CD8-positive, alpha-beta memory T cell (primary cell): ENCODE measurements at regions of chr11 and their contacts with region 1.

Region 1: DNA sequence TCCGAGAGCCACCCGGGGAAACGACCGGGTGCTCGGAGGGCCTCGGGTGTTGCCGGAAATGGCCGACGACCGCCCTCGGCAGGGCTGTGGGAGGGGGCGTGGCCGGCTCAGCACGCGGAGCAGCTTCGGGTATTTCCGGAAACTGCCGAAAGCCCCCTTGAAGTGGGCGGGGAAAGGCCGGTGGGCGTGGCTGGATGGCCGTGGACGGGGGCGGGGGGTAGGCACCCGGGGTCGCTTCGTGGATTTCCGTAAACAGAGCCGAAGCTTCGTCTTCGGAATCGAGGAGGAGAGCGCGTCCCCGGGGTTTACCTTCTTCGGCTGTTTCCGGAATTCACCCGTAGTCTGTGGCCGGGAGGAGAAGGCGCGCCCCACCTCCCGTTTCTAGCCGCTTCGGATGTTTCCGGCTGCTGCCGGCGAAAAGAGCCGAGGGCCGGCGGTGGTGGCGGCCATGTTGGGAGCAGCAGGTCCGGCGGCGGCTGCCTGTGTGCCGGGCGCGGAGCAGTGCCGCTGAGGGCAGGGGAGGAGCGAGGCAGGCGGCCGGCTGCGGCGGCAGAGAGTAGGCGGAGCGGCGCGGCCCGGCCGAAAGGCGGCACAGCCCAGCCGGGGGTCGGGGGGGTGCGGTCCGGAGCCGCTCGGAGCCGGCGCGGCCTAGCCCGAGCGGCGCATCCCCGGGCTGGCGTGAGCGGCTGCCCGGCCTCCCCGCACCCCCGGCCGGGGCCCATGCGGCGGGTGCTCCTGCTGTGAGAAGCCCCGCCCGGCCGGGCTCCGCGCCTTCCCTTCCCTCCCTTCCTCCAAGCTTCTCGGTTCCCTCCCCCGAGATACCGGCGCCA is at the start of gene MARK2:
- DNase-seq: peak; percentile 99 to 100 (median 100)
- H3K4me3 ChIP-seq: peak within 1 kb of the TSS; percentile 56
- H3K4me3 Mint-ChIP-seq: peak within 1 kb of the TSS; percentile 88 to 96 (median 92)
- H3K27ac ChIP-seq: peak within 1 kb of the TSS; percentile 80
- H3K27ac Mint-ChIP-seq: peak within 1 kb of the TSS; percentile 79 to 96 (median 92)
- H3K4me1 ChIP-seq: peaks cover 36% of the 10 kb centered on the region
- H3K4me1 Mint-ChIP-seq: peaks cover 54 to 61% (median 60%) of the 10 kb centered on the region in 3 donors
- H3K27me3 ChIP-seq: no peaks in the 10 kb centered on the region
- H3K27me3 Mint-ChIP-seq: peaks cover 0 to 4% of the 10 kb centered on the region in 2 donors
- total RNA-seq, gene MARK2: 34.5 to 38.0 TPM

Region 2: DNA sequence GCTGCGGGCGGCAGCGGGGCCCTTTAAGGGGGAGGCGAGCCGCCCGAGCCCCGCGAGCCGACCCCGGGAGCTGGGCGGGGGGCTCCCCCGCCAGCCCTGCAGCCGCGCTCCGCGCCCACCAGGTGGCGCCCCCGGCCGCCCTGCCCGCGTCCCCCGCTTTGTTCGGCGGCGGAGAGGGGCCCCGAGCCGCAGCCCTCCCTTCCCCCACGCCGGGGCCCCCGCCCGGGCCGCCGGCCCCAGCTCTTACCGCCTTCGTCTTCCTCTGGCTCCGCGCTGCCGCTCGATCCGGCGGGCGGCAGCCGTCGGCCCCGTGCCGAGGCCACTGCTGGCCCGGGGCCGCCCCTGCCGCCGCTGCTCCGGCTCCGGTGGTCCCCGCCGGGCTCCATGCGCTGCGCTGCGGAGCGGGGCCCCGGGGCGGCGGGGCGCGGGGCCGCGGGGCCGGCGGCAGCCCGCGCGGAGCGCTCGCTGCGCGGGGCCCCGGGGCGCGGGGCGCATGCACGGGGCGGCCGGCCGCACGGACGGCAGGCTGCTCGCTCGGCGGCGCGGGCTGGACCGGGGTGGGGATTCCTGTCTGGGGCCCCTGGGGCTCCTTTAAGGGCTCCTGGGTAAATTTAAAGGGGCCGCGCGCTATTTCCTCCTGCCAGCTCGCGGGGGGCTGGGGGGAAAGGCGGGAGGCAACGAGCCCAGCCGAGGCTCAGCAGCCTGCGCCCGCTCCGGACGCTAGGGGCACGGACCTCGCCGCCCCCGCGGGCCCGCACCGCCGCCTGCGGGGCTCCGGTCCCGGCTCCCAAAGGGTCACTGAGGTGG is 70.5 kb before region 1 on chr11 and contains the start of gene ZFTA:
- CTCF ChIA-PET with region 1: interaction called, 14 read pairs
- POLR2A ChIA-PET with region 1: interaction called, 3 read pairs
- DNase-seq: peak; percentile 50 to 76 (median 63)
- H3K4me3 ChIP-seq: peak within 1 kb of the TSS; percentile 76
- H3K4me3 Mint-ChIP-seq: peak within 1 kb of the TSS; percentile 87 to 99 (median 95)
- H3K27ac ChIP-seq: peak within 1 kb of the TSS; percentile 64
- H3K27ac Mint-ChIP-seq: peak within 1 kb of the TSS in 7 of 8 donors; percentile 23 to 91 (median 83)
- H3K4me1 ChIP-seq: peaks cover 8% of the 10 kb centered on the region
- H3K4me1 Mint-ChIP-seq: peaks cover 8 to 17% (median 9%) of the 10 kb centered on the region in 3 donors
- H3K27me3 ChIP-seq: no peaks in the 10 kb centered on the region
- H3K27me3 Mint-ChIP-seq: peaks cover 4 to 9% of the 10 kb centered on the region in 2 donors
- total RNA-seq, gene ZFTA: 7.0 to 7.6 TPM

Region 3: DNA sequence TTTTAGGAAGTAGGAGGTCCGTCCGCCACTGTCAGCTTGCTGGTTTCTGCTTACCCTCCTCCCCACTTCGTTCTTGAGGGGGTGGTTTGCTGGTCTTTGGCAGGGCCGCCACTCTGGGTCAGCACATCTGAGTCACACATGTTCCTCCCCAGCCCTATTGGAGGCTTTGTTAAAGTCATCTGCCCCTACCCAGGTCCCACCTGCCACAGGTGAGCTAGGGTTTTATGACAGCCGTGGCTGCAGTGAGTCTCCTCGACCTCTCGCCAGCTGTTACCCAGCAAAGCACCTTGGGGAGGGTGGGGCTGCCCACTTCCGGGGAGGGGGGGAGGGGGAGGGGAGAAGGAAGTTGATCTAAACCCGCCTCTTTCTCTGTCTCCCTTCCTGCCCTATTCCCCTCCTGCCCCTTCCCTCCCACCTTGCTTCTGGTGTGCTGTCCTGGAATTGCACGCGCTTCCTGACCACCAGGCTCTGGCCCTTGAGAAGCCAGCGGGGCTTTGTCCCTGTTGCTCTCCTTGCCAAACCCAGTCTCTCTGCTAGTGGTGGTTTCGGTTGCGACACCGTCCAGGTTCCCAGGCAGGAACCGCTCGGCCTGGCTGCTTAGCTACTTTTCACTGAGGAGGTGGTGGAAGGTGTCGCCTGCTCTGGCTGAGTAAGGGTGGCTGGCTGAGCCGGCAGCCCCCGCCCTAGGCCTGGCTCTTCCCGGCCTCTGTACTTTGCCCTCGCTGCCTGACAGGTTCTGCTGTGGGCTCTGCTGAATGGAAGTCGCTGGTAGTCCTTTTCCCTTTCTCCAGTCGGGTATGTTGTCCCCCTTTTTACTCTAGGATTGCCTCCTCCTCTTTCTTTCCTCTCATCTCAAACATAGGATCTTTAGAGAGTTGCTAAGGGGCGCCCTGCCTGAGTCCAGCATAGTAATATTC is 49.5 kb after region 1 on chr11:
- CTCF ChIA-PET with region 1: interaction called, 20 read pairs
- POLR2A ChIA-PET with region 1: interaction called, 8 read pairs
- DNase-seq: peak; percentile 59 to 81 (median 69)
- H3K4me3 ChIP-seq: peak overlapping the region; percentile 77
- H3K4me3 Mint-ChIP-seq: peak overlapping the region; percentile 90 to 98 (median 95)
- H3K27ac ChIP-seq: peak overlapping the region; percentile 85
- H3K27ac Mint-ChIP-seq: peak overlapping the region; percentile 80 to 99 (median 97)
- H3K4me1 ChIP-seq: peaks cover 73% of the 10 kb centered on the region
- H3K4me1 Mint-ChIP-seq: peaks cover 70 to 83% (median 82%) of the 10 kb centered on the region in 3 donors
- H3K27me3 ChIP-seq: no peaks in the 10 kb centered on the region
- H3K27me3 Mint-ChIP-seq: no peaks in the 10 kb centered on the region

Region 4: DNA sequence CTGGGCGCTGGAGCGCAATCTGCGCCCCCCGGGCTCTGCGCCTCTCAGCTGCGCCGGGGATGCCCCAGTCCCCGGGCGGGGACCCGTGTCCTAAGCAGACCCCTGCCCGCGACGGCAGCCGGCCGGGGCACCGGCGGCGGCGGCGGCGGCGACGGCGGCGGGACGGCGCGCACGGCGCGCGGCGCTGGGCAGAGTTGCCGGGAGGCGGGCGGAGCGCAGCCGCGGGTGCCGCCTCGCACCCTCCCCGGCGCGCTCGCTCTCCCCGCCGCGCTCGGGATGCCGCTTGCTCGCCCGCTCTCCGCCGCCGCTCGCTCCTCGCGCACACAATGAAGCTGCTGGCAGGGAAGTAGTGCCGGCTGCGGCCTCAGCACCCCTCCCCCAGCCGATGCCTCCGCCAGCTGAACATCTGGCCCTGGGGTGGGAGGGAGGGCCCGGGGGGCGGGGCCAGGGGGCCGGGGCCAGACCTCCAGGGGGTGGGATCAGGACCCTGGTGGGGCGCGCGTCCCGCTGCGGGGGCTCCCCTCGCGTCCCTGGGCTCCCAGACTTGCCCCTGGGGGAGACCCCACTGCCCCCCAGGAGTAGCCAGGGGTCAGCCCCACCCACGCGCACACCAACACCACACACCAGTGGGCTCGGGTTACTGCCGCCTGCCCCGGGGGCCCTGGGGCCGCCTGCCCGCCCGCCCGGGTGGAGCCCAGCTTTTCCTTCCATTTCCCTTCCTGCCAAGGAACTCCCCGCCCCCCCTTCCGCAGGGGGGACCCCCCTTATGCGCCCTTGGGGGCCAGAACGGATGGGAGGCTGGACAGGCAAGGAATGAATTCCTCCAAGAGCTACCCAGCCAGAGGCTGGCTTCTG is 78.2 kb after region 1 on chr11 and contains the start of gene RCOR2:
- CTCF ChIA-PET with region 1: interaction called, 16 read pairs
- POLR2A ChIA-PET with region 1: no interaction called
- DNase-seq: peak; percentile 28 to 69 (median 44)
- H3K4me3 ChIP-seq: peak within 1 kb of the TSS; percentile 69
- H3K4me3 Mint-ChIP-seq: peak within 1 kb of the TSS; percentile 78 to 89 (median 83)
- H3K27ac ChIP-seq: no peak within 1 kb of the TSS
- H3K27ac Mint-ChIP-seq: peak within 1 kb of the TSS in 3 of 8 donors; percentile 56 to 72 (median 60)
- H3K4me1 ChIP-seq: peaks cover 27% of the 10 kb centered on the region
- H3K4me1 Mint-ChIP-seq: peaks cover 8 to 26% (median 11%) of the 10 kb centered on the region in 3 donors
- H3K27me3 ChIP-seq: no peaks in the 10 kb centered on the region
- H3K27me3 Mint-ChIP-seq: peaks cover 0 to 1% of the 10 kb centered on the region in 2 donors
- total RNA-seq, gene RCOR2: 0.11 to 0.13 TPM

Region 5: GRCh38 chr11:63945477-63946163 is 106.7 kb after region 1 on chr11:
- CTCF ChIA-PET with region 1: interaction called, 225 read pairs
- POLR2A ChIA-PET with region 1: interaction called, 6 read pairs
- DNase-seq: peak; percentile 14 to 61 (median 45)
- H3K4me3 ChIP-seq: no peak overlapping the region
- H3K4me3 Mint-ChIP-seq: no peak overlapping the region
- H3K27ac ChIP-seq: no peak overlapping the region
- H3K27ac Mint-ChIP-seq: peak overlapping the region in 2 of 8 donors; percentile 8 to 32
- H3K4me1 ChIP-seq: no peaks in the 10 kb centered on the region
- H3K4me1 Mint-ChIP-seq: peaks cover 13 to 22% (median 22%) of the 10 kb centered on the region in 3 donors
- H3K27me3 ChIP-seq: no peaks in the 10 kb centered on the region
- H3K27me3 Mint-ChIP-seq: no peaks in the 10 kb centered on the region

Region 6: GRCh38 chr11:64152841-64153691 is 314.2 kb after region 1 on chr11:
- CTCF ChIA-PET with region 1: interaction called, 63 read pairs
- POLR2A ChIA-PET with region 1: no interaction called
- DNase-seq: peak; percentile 54 to 72 (median 62)
- H3K4me3 ChIP-seq: no peak overlapping the region
- H3K4me3 Mint-ChIP-seq: no peak overlapping the region
- H3K27ac ChIP-seq: no peak overlapping the region
- H3K27ac Mint-ChIP-seq: peak overlapping the region in 1 of 8 donors; percentile 51
- H3K4me1 ChIP-seq: no peaks in the 10 kb centered on the region
- H3K4me1 Mint-ChIP-seq: peaks cover 0 to 6% (median 2%) of the 10 kb centered on the region in 3 donors
- H3K27me3 ChIP-seq: no peaks in the 10 kb centered on the region
- H3K27me3 Mint-ChIP-seq: peaks cover 0 to 2% of the 10 kb centered on the region in 2 donors